WTC11 (cell line): ENCODE measurements at regions of chr10 and their contacts with region 1.

Region 1: DNA sequence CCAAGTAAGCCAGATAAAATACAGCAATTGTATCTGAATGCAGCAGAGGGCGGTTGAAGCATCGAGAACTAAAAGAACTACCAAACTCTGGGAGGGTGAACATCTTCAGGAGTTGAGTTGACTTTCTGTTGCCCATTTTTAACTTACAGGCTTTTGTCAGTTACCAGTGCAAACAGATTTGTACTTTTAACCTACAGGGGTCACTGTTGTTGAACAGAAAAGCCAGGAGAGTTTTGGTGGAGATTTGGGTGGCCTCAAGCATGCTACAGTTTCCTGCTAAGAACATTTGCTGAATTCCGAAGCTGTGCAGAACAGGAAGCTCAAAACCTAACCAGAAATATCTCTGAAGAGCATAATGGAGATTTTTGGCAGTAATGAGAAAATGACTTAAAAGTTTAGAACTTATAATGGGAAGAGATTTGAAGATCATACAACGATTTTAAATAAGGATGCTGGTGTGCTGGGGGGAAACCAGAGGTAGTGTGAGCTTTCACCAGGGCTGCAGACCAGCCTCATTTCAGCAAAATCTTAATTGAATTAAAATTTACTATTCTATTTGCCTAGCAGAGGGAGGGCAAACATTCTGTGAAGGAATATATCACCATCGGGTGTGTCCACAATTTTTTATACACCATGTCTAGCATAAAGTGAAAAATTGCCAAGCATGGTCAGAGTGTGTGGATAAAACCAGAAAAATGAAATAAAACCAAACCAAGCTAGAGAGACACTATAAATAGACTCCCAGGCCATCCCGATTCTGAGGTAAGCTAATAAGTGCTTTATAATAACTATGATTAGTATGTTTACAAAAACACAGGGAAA is 208.6 kb upstream of the CCDC6 start:
- DNase-seq: no peak
- ATAC-seq: peak; percentile 90
- H3K4me3 Mint-ChIP-seq: no peak overlapping the region
- H3K27ac Mint-ChIP-seq: no peak overlapping the region
- H3K4me1 Mint-ChIP-seq: no peaks in the 10 kb centered on the region
- H3K27me3 Mint-ChIP-seq: no peaks in the 10 kb centered on the region
- CTCF ChIP-seq: peak; percentile 39; the same call in 1 of the 2 replicates

Region 2: DNA sequence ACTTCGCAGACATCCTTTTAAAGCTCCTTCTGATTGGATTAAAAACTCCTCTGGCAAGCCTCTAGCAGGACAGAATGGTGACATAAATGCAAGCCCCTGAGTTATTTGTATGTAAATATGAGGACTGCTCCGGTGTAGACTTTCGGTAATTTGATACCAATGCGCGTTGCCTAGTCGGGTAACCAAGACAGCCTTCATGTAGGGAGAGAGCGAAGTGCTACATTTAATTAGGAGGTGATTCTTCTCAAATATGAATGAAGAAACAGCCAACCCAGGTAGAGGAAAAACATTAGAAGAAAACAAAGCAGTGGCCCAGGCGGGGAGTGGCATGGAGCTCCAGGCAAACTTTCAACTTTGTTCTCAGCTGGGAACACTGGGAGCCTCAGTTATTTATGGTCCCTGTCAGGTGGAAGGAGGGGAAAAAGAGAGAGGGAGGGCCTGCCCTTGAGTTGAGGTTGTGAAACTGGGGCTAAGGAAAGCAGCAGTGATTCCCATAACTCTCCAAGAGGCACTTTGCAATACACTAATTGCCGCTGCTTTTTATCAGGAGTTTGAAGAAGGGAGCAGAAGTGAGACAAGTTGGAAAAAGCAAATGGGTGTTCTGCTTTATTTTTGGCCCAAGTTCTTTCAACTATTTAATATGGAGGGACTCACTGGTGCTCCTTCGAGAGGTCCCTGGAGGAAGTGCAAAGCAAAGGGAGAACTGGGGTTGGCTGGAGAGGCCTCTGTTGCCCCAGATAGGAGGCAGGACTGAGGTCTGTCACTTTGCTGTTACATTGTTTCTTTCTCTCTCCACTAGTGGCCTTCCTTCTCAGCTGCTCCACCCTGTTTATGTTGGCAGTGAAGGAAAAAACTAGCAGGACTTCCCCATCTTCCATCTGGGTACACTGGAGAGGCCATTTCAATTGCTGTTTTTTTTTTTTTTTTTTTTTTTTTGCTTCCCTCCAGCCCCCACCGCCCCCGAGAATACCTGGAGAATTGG is 26.0 kb after region 1 on chr10:
- CTCF ChIA-PET with region 1: interaction called, 15 read pairs
- POLR2A ChIA-PET with region 1: no interaction called
- DNase-seq: peak; percentile 48
- ATAC-seq: peak; percentile 95
- H3K4me3 Mint-ChIP-seq: no peak overlapping the region
- H3K27ac Mint-ChIP-seq: no peak overlapping the region
- H3K4me1 Mint-ChIP-seq: peaks cover 18% of the 10 kb centered on the region
- H3K27me3 Mint-ChIP-seq: no peaks in the 10 kb centered on the region
- CTCF ChIP-seq: no peak

Region 3: DNA sequence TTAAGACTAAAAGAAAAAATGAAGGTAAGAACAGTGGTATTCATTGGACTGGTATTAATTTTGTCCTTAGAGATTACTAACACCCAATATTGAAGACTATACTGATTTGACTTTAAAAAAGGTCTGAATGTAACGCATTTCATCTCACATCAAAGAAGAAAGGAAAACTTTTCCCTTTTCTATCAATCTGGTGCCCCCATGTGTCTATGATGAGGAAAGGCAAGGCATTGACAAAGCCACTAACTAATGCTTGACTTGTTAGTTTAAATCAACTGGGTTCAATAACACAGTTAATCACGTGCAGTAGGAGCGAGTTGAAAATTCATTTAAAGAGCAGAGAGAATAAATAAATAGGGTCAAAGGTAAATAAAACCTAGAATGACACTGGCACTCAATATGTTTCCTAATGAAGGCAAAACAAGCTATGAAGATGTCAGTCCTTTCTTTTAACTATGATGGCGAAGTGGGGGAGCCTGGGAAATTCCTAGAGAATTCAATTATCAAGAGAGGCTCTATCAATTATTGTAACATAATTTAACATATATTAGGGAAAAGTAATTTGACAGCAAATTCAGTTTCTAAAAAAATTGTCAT is 93.8 kb after region 1 on chr10:
- CTCF ChIA-PET with region 1: interaction called, 47 read pairs
- POLR2A ChIA-PET with region 1: no interaction called
- DNase-seq: no peak
- ATAC-seq: peak; percentile 61; the same call in 1 of the 2 replicates
- H3K4me3 Mint-ChIP-seq: no peak overlapping the region
- H3K27ac Mint-ChIP-seq: no peak overlapping the region
- H3K4me1 Mint-ChIP-seq: peaks cover 26% of the 10 kb centered on the region
- H3K27me3 Mint-ChIP-seq: no peaks in the 10 kb centered on the region
- CTCF ChIP-seq: 0 out of 2 replicates have a peak, but pooled peaks have one; percentile 33

Region 4: DNA sequence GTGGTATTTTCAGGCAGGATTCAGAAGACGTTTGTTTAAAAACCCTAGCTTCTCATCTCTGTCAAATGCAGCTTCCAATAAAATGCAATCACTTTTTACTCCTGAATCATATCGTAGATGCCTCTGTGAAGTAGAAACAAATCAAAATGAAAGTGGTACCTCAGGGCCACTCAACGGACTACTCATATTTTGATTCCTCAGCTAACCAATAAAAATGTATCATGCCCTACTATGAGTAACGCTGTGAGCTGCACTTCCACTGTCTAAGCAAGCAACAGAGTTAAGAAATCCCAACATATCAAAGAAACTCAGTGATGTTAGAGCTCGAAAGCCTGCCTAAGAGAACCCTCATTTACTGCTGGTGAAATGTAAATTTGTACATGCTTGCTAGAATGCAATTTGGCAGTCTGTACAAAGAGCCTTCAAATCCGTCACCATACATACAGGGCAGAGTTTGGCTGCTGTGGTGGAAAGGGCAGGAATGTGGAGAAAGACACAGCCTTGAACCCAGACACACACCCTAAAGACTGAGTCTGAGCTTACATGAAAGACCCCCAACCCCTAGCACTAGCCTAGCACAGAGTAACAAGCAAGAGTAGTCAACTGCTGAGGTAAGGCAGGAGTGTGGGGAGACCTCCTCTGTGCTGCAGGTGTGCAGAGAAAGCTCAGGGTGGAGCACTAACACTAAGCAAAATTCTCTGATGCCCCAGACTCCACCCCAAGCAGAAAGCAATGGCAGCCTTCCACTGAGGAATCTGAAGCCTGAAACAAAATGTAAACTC is 123.2 kb after region 1 on chr10:
- CTCF ChIA-PET with region 1: interaction called, 10 read pairs
- POLR2A ChIA-PET with region 1: no interaction called
- DNase-seq: peak; percentile 36
- ATAC-seq: peak; percentile 99
- H3K4me3 Mint-ChIP-seq: no peak overlapping the region
- H3K27ac Mint-ChIP-seq: no peak overlapping the region; the same call in 1 of the 2 replicates
- H3K4me1 Mint-ChIP-seq: peaks cover 8% of the 10 kb centered on the region
- H3K27me3 Mint-ChIP-seq: no peaks in the 10 kb centered on the region
- CTCF ChIP-seq: no peak